Activated CD4-positive, alpha-beta memory T cell treated with anti-CD3 and anti-CD28 coated beads for 36 hours (primary cell): ENCODE measurements at regions of chr13 and their contacts with region 1.

Region 1: DNA sequence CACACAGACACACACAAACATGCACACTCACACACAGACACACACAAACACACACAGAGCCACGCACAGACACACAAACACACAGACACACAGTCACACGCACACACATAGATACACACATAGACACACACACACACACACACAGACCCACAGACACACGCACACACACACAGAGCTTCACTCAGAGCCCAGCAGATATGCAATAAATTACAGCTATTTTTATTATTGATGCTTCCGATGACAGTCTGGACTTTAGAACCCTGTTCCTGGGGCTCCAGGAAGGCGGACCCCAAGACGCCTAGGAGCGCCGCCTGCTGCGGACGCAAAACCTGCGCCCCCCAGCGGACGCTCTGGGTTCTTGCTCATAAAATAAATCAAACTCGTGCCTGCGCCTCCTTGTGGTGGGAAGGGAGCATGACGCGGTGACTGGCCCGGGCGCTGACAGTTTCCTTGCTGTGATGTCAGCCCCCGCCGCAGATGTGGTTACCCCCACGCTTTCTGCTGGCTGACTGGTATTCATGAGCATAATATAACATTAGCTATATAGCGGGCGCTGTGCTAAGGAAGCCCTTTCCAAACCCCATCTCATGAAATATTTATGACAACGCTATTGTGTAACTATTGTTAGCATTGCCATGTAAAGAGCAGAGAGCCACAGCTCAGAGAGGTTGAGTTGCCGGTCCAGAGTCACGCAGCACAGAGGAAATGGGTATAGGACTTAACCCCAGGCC is 64.4 kb upstream of the TM9SF2 start:
- DNase-seq: peak; percentile 98
- H3K4me3 Mint-ChIP-seq: peak overlapping the region; percentile 23
- H3K27ac Mint-ChIP-seq: peak overlapping the region; percentile 69
- H3K4me1 Mint-ChIP-seq: peaks cover 64% of the 10 kb centered on the region
- H3K27me3 Mint-ChIP-seq: peaks cover 8% of the 10 kb centered on the region

Region 2: GRCh38 chr13:97432917-97433726 is 2003.7 kb before region 1 on chr13:
- CTCF ChIA-PET with region 1: no interaction called
- POLR2A ChIA-PET with region 1: no interaction called
- intact Hi-C with region 1: loop called (anchors 2 kb)
- DNase-seq: peak; percentile 99
- H3K4me3 Mint-ChIP-seq: peak overlapping the region; percentile 95
- H3K27ac Mint-ChIP-seq: peak overlapping the region; percentile 99
- H3K4me1 Mint-ChIP-seq: peaks cover 22% of the 10 kb centered on the region
- H3K27me3 Mint-ChIP-seq: peaks cover 3% of the 10 kb centered on the region

Region 3: GRCh38 chr13:99176309-99177276 is 260.3 kb before region 1 on chr13:
- CTCF ChIA-PET with region 1: interaction called, 27 read pairs
- POLR2A ChIA-PET with region 1: no interaction called
- intact Hi-C with region 1: loop called (anchors 1 kb)
- DNase-seq: peak; percentile 84
- H3K4me3 Mint-ChIP-seq: peak overlapping the region; percentile 45
- H3K27ac Mint-ChIP-seq: no peak overlapping the region
- H3K4me1 Mint-ChIP-seq: peaks cover 25% of the 10 kb centered on the region
- H3K27me3 Mint-ChIP-seq: peaks cover 3% of the 10 kb centered on the region

Region 4: DNA sequence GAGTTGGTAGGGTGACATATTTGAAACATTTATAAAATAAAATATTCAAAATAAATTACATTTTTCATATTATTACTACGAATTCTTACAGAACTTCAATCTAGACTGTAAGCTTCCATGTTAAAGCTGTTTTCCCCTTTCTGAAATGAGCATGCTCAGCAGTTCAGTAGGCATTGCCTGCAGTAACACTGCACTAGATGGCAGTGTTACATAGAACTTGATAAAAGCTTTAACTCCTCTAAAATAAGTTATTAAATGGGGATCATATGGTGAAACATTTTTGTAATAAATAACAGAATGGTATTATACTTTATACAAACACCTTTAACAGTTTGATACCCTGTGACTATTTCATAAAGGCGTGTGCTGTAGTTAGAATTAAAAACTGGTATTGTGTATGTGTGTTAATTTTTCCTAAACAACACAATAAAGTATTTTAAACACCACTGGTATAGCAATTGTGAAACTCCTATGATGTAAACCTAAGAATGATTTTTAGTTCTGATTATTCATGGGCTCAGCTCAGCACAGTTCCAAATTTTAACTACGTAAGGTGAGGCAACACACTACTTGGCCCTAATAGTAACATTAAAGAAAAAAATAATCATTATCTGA is 167.1 kb before region 1 on chr13:
- CTCF ChIA-PET with region 1: interaction called, 271 read pairs
- POLR2A ChIA-PET with region 1: interaction called, 26 read pairs
- intact Hi-C with region 1: loop called (anchors 1 kb)
- DNase-seq: no peak
- H3K4me3 Mint-ChIP-seq: no peak overlapping the region
- H3K27ac Mint-ChIP-seq: peak overlapping the region; percentile 62
- H3K4me1 Mint-ChIP-seq: peaks cover 62% of the 10 kb centered on the region
- H3K27me3 Mint-ChIP-seq: no peaks in the 10 kb centered on the region

Region 5: DNA sequence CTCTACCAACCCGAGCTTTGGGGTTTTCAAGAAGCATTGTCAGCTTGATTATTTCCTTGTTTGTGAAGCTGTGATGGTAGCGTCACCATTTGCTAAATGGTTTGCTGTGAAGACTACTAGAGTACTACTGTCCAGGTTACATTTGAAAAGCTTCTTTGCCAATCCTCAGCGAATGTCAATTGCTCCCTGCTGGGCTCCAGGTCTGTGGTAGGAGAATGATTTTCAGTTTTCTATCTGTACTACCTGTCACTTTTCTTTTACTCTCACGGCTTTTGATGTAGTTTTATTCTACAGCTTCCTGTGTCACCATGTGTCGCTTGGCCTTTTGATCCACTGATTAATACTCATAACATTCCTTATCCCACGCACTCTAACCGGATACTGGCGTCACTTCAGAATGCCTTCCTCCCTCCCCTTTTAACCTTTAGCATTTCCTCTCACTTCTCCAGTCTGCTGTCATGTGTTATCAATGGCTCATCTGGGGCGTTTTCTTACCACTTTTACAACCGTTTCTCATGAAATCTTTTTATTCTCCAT is 122.1 kb before region 1 on chr13:
- CTCF ChIA-PET with region 1: interaction called, 18 read pairs
- POLR2A ChIA-PET with region 1: interaction called, 6 read pairs
- intact Hi-C with region 1: loop called (anchors 2 kb)
- DNase-seq: peak; percentile 87
- H3K4me3 Mint-ChIP-seq: peak overlapping the region; percentile 64
- H3K27ac Mint-ChIP-seq: peak overlapping the region; percentile 93
- H3K4me1 Mint-ChIP-seq: peaks cover 82% of the 10 kb centered on the region
- H3K27me3 Mint-ChIP-seq: no peaks in the 10 kb centered on the region

Region 6: DNA sequence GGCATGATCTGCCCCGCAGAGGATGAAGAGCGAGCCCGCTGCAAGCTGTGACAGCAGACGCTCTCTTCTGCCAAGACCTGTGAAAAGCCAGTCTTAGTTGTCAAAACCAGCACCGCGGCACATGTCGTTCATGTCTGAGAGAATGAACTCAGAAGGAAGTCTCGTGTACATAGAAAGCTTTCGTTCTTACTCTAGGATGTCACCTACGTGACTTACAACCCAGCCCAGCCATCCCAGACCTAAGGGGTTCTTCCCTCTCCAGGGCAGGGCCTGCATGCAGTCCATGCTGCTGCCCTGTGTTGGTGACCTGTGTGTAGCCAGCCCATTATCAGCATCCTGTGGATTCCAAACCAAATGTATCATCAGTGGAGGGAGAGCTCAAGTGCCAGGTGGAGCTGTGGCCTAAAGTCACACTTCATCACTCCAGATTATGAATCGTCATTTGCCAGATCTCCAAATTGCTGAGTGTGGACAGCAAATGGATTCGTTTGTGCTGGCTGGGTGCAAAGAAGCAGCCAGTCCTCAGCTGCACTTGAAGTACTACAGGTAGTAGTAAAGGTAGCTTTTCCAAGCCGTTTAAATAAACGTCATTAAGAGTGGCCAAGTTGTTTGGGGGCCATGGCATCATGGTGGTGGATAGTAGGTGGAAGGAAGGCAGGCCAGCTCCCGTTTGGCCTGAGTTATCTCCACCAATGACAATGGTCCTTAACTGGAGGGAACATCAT is 55.8 kb before region 1 on chr13:
- CTCF ChIA-PET with region 1: interaction called, 290 read pairs
- POLR2A ChIA-PET with region 1: interaction called, 12 read pairs
- intact Hi-C with region 1: no loop called
- DNase-seq: peak; percentile 87
- H3K4me3 Mint-ChIP-seq: peak overlapping the region; percentile 36
- H3K27ac Mint-ChIP-seq: peak overlapping the region; percentile 89
- H3K4me1 Mint-ChIP-seq: peaks cover 84% of the 10 kb centered on the region
- H3K27me3 Mint-ChIP-seq: no peaks in the 10 kb centered on the region

Region 7: DNA sequence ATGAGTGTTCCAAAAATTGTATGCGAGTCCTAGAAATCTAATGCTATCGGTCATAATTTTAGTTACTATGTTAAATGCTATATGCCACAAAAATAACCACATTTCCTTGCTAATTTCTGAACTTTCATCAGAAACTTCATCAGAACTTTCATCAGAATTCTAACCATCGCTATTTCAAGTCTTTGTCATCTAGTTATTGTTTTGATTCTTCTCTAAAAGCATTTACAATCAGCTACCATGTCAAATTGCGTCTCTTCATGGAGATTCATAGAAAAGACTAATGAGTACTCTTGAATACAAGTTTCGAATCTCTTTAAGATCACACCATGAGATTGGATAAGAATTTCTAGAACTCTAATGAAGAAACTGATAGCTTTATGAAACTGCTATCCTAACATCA is 11.7 kb after region 1 on chr13:
- CTCF ChIA-PET with region 1: interaction called, 21 read pairs
- POLR2A ChIA-PET with region 1: interaction called, 3 read pairs
- intact Hi-C with region 1: no loop called
- DNase-seq: no peak
- H3K4me3 Mint-ChIP-seq: no peak overlapping the region
- H3K27ac Mint-ChIP-seq: peak overlapping the region; percentile 42
- H3K4me1 Mint-ChIP-seq: peaks cover 30% of the 10 kb centered on the region
- H3K27me3 Mint-ChIP-seq: peaks cover 17% of the 10 kb centered on the region